PC-9 (cell line): ENCODE measurements at regions of chr12 and their contacts with region 1.

Region 1: GRCh38 chr12:46944088-46944487 is 118.3 kb upstream of the SLC38A4 start:
- DNase-seq: no peak
- H3K4me3 ChIP-seq: no peak overlapping the region
- H3K27ac ChIP-seq: no peak overlapping the region
- H3K4me1 ChIP-seq: no peaks in the 10 kb centered on the region; the same call in 1 of the 2 replicates
- H3K27me3 ChIP-seq: no peaks in the 10 kb centered on the region
- CTCF ChIP-seq: no peak

Region 2: GRCh38 chr12:46577063-46577776 is 366.9 kb before region 1 on chr12:
- CTCF ChIA-PET with region 1: no interaction called
- POLR2A ChIA-PET with region 1: interaction called, 17 read pairs
- intact Hi-C with region 1: no loop called
- DNase-seq: no peak
- H3K4me3 ChIP-seq: no peak overlapping the region
- H3K27ac ChIP-seq: no peak overlapping the region
- H3K4me1 ChIP-seq: no peaks in the 10 kb centered on the region
- H3K27me3 ChIP-seq: no peaks in the 10 kb centered on the region
- CTCF ChIP-seq: no peak

Region 3: DNA sequence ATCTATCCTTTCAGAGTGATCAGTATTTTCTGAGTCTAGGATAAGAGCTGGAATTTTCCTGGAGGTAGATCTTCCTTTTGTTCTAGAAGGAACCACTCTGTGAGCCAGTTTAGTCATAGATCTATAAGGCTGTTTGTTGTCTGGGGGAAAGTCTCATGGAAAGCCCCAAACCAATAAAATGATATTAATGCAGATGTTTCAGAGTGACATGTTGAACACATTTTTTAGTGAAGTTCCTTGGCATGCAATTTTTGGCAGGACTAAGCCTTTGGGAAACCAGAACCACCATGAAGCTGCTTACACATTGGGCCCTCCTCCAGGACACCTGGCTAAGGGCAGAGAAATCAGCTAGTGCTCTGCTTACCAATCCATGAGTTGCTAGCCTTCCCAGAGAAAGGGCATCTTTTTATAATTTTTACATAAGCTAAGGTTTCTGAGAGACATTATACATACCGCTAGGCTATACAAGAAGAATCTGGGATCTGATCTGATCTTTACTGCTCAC is 33.8 kb after region 1 on chr12:
- CTCF ChIA-PET with region 1: interaction called, 8 read pairs
- POLR2A ChIA-PET with region 1: interaction called, 10 read pairs
- intact Hi-C with region 1: loop called (anchors 5 kb)
- DNase-seq: no peak
- H3K4me3 ChIP-seq: no peak overlapping the region
- H3K27ac ChIP-seq: no peak overlapping the region
- H3K4me1 ChIP-seq: no peaks in the 10 kb centered on the region
- H3K27me3 ChIP-seq: no peaks in the 10 kb centered on the region
- CTCF ChIP-seq: no peak

Region 4: GRCh38 chr12:46983393-46984266 is 39.5 kb after region 1 on chr12:
- CTCF ChIA-PET with region 1: interaction called, 13 read pairs
- POLR2A ChIA-PET with region 1: no interaction called
- intact Hi-C with region 1: loop called (anchors 5 kb)
- DNase-seq: peak; percentile 44 to 62
- H3K4me3 ChIP-seq: no peak overlapping the region
- H3K27ac ChIP-seq: no peak overlapping the region
- H3K4me1 ChIP-seq: peaks cover 14% of the 10 kb centered on the region
- H3K27me3 ChIP-seq: no peaks in the 10 kb centered on the region
- CTCF ChIP-seq: peak; percentile 84